Endothelial cell of umbilical vein (primary cell): ENCODE measurements at regions of chr4 and their contacts with region 1.

Region 1: GRCh38 chr4:129929052-129929451 is 833.1 kb downstream of the C4orf33 start:
- DNase-seq: peak; percentile 5
- H3K4me3 ChIP-seq: no peak overlapping the region
- H3K27ac ChIP-seq: no peak overlapping the region
- H3K4me1 ChIP-seq: no peaks in the 10 kb centered on the region
- H3K27me3 ChIP-seq: no peaks in the 10 kb centered on the region
- CTCF ChIP-seq: peak in 1 of 2 donors; percentile 20
- POLR2A ChIP-seq: no peak

Region 2: GRCh38 chr4:129526814-129527213 is 402.2 kb before region 1 on chr4:
- CTCF ChIA-PET with region 1: interaction called, 4 read pairs
- POLR2A ChIA-PET with region 1: no interaction called
- dilution Hi-C with region 1: no loop called
- intact Hi-C with region 1: loop called (anchors 10 kb)
- DNase-seq: peak; percentile 57
- H3K4me3 ChIP-seq: no peak overlapping the region
- H3K27ac ChIP-seq: no peak overlapping the region
- H3K4me1 ChIP-seq: no peaks in the 10 kb centered on the region
- H3K27me3 ChIP-seq: no peaks in the 10 kb centered on the region
- CTCF ChIP-seq: no peak
- POLR2A ChIP-seq: no peak

Region 3: DNA sequence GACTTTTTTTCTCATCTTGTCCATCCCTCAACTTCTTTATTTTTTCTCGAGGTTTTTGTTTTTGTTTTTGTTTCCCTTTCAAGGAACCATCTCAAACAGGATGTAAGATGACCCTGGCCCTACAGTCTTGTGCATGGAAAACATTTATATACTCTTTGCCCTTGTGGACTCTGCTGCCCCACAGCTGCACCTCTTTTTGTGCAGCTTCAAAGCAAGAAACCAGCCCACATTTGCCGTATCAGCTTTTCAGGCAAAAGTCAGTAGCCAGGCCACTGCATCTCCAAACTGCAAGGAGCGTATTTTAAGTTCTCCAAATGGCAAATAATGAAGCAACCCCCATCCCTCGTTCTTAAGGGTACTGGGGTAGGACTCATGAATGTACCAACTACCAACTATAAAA is 76.6 kb before region 1 on chr4:
- CTCF ChIA-PET with region 1: no interaction called
- POLR2A ChIA-PET with region 1: no interaction called
- dilution Hi-C with region 1: no loop called
- intact Hi-C with region 1: no loop called
- DNase-seq: no peak
- H3K4me3 ChIP-seq: no peak overlapping the region
- H3K27ac ChIP-seq: no peak overlapping the region
- H3K4me1 ChIP-seq: no peaks in the 10 kb centered on the region
- H3K27me3 ChIP-seq: no peaks in the 10 kb centered on the region
- CTCF ChIP-seq: no peak
- POLR2A ChIP-seq: no peak

Region 4: DNA sequence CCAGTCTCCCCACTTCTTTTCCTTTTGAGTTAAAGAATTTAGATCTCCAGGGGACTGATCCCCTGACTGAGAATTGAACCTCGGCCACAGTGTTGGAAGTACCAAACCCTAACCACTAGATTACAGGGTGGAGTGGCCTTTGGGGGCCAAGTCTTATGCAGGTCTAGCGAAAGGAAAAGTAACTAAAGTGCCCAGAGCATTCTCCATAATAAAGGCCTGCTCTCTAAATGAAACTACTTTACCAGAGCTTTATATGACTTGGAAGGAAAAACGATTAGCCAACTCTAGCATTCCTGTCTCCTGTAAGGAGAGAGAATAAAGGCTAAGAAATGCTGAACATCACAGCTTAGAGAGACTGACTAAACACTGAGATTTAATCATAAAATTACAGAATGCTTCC is 45.1 kb before region 1 on chr4:
- CTCF ChIA-PET with region 1: no interaction called
- POLR2A ChIA-PET with region 1: no interaction called
- dilution Hi-C with region 1: no loop called
- intact Hi-C with region 1: no loop called
- DNase-seq: no peak
- H3K4me3 ChIP-seq: no peak overlapping the region
- H3K27ac ChIP-seq: no peak overlapping the region
- H3K4me1 ChIP-seq: no peaks in the 10 kb centered on the region
- H3K27me3 ChIP-seq: no peaks in the 10 kb centered on the region
- CTCF ChIP-seq: no peak
- POLR2A ChIP-seq: no peak